GM12878 (cell line): ENCODE measurements at regions of chr1 and their contacts with region 1.

Region 1: GRCh38 chr1:24930204-24931145 is at the start of gene RUNX3:
- DNase-seq: peak; percentile 76
- ATAC-seq: peak; percentile 77
- H3K4me3 ChIP-seq: peak within 1 kb of the TSS; percentile 99
- H3K27ac ChIP-seq: peak within 1 kb of the TSS; percentile 89
- H3K4me1 ChIP-seq: peaks cover 40% of the 10 kb centered on the region
- H3K27me3 ChIP-seq: no peaks in the 10 kb centered on the region
- CTCF ChIP-seq: peak; percentile 14 to 45 (median 35); a peak in 3 of 6 replicates
- EP300 ChIP-seq: peak in 1 of 2 experiments; percentile 39; a peak in 1 of 4 replicates
- POLR2A ChIP-seq: peak; percentile 11; the same call in 1 of the 2 replicates
- RAD21 ChIP-seq: no peak
- polyA plus RNA-seq, gene RUNX3: 21.6 to 26.3 TPM

Region 2: GRCh38 chr1:24878775-24879742 is 51.4 kb before region 1 on chr1:
- CTCF ChIA-PET with region 1: no interaction called
- POLR2A ChIA-PET with region 1: no interaction called
- RAD21 ChIA-PET with region 1: no interaction called
- SMC1A ChIA-PET with region 1: no interaction called
- in situ Hi-C with region 1: no loop called
- intact Hi-C with region 1: no loop called
- DNase-seq: no peak
- ATAC-seq: no peak
- H3K4me3 ChIP-seq: no peak overlapping the region
- H3K27ac ChIP-seq: no peak overlapping the region
- H3K4me1 ChIP-seq: no peaks in the 10 kb centered on the region
- H3K27me3 ChIP-seq: no peaks in the 10 kb centered on the region; a peak in 3 of 4 replicates
- CTCF ChIP-seq: no peak
- EP300 ChIP-seq: no peak
- POLR2A ChIP-seq: no peak
- RAD21 ChIP-seq: no peak

Region 3: GRCh38 chr1:24897767-24898483 is 32.5 kb before region 1 on chr1:
- CTCF ChIA-PET with region 1: interaction called, 13 read pairs
- POLR2A ChIA-PET with region 1: interaction called, 5 read pairs
- RAD21 ChIA-PET with region 1: interaction called, 8 read pairs
- SMC1A ChIA-PET with region 1: interaction called, 8 read pairs
- in situ Hi-C with region 1: no loop called
- intact Hi-C with region 1: no loop called
- DNase-seq: no peak
- ATAC-seq: peak; percentile 71
- H3K4me3 ChIP-seq: no peak overlapping the region
- H3K27ac ChIP-seq: no peak overlapping the region
- H3K4me1 ChIP-seq: peaks cover 7% of the 10 kb centered on the region
- H3K27me3 ChIP-seq: no peaks in the 10 kb centered on the region
- CTCF ChIP-seq: peak; percentile 83 to 92 (median 87)
- EP300 ChIP-seq: no peak
- POLR2A ChIP-seq: peak; percentile 43; the same call in 1 of the 2 replicates
- RAD21 ChIP-seq: peak; percentile 66

Region 4: GRCh38 chr1:24955161-24955560 is 24.7 kb after region 1 on chr1:
- CTCF ChIA-PET with region 1: interaction called, 314 read pairs
- POLR2A ChIA-PET with region 1: interaction called, 23 read pairs
- RAD21 ChIA-PET with region 1: interaction called, 121 read pairs
- SMC1A ChIA-PET with region 1: interaction called, 391 read pairs
- in situ Hi-C with region 1: no loop called
- intact Hi-C with region 1: no loop called
- DNase-seq: no peak
- ATAC-seq: peak; percentile 57
- H3K4me3 ChIP-seq: peak overlapping the region; percentile 52
- H3K27ac ChIP-seq: peak overlapping the region; percentile 76
- H3K4me1 ChIP-seq: peaks cover 92% of the 10 kb centered on the region
- H3K27me3 ChIP-seq: no peaks in the 10 kb centered on the region
- CTCF ChIP-seq: no peak
- EP300 ChIP-seq: no peak
- POLR2A ChIP-seq: no peak; the same call in 1 of the 2 replicates
- RAD21 ChIP-seq: no peak

Region 5: DNA sequence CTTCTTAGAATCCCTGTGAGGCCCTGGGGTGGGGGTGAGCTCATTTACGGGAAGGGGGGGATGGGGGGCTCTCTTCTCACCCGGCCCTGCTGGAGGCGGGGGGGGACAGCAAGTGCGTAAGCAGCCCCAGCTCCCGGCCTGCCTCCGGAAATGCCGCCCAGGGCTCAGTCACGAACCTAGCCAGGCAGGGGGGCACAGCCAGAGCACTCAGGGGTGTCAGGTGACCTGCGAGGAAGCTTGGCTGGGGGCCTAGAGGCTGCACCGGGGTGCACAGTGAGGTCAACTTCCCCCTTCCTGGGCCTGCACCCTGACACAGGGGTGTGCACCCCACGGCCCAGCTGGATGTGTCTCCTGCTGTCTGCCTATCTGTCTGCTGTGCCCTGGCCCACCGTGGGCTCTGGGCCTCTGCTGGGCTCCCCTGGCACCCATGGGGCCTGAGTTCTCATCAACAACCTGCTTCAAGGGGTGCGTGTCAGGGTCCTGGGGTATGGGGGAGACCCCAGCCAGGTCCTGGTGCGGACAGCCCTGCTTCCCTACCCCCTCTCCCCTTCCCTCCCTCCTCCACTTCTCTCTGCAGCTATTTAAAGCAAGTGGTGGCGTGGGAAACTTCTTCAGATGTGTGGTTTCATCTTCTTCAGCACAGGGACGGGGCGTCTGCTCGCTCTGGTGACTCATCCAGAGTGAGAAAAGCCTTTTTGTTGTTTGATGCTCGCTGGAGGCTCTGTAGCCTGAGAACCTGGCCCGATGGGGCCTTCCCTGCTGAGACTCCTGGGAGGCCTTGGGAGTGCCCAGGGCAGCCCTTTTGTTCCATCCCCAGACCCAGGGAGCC is 92.1 kb after region 1 on chr1:
- CTCF ChIA-PET with region 1: interaction called, 9 read pairs
- POLR2A ChIA-PET with region 1: interaction called, 15 read pairs
- RAD21 ChIA-PET with region 1: interaction called, 35 read pairs
- SMC1A ChIA-PET with region 1: interaction called, 33 read pairs
- in situ Hi-C with region 1: no loop called
- intact Hi-C with region 1: no loop called
- DNase-seq: peak; percentile 97
- ATAC-seq: peak; percentile 85
- H3K4me3 ChIP-seq: peak overlapping the region; percentile 56
- H3K27ac ChIP-seq: peak overlapping the region; percentile 100
- H3K4me1 ChIP-seq: peaks cover 94% of the 10 kb centered on the region
- H3K27me3 ChIP-seq: no peaks in the 10 kb centered on the region
- CTCF ChIP-seq: no peak
- EP300 ChIP-seq: peak; percentile 96 to 97
- POLR2A ChIP-seq: no peak
- RAD21 ChIP-seq: peak; percentile 34